ENCODE measurements at regions of chr1 and their contacts with region 1.

Region 1: GRCh38 chr1:246699095-246699735 is 25.0 kb upstream of the SCCPDH start:
- DNase-seq: peak; percentile 89
- ATAC-seq: peak; percentile 88
- H3K4me3 ChIP-seq: peak overlapping the region in 3 of 5 experiments; percentile 31 to 55 (median 52)
- H3K4me3 Mint-ChIP-seq: peak overlapping the region; percentile 26
- H3K27ac ChIP-seq: peak overlapping the region in 1 of 2 donors; percentile 50
- H3K27ac Mint-ChIP-seq: peak overlapping the region; percentile 1
- H3K4me1 ChIP-seq: peaks cover 6 to 15% of the 10 kb centered on the region in 2 donors
- H3K4me1 Mint-ChIP-seq: peaks cover 7% of the 10 kb centered on the region
- H3K27me3 ChIP-seq: no peaks in the 10 kb centered on the region
- H3K27me3 Mint-ChIP-seq: no peaks in the 10 kb centered on the region
- CTCF ChIP-seq: peak; percentile 80

Region 2: DNA sequence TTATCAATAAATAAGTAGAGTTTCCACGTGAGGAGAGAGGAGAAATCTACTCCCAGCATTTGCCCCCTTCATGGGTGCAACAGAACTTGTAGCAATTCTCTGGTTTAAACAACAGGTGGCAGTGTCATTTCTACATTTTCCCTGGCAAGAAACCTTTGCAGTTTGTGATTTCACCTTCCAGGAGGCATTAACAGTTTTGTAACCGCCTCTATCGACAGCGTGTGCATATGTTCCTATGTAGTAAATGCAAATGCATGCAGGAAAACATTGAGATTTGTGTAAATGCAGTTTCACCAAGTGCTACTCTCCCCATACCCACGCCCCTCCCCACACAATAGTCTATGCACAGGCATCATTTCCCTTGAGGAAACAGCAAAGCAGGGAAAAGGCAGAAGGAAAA is 686.9 kb before region 1 on chr1:
- CTCF ChIA-PET with region 1: no interaction called
- POLR2A ChIA-PET with region 1: no interaction called
- intact Hi-C with region 1: loop called (anchors 2 kb)
- DNase-seq: peak; percentile 16
- ATAC-seq: no peak
- H3K4me3 ChIP-seq: no peak overlapping the region
- H3K4me3 Mint-ChIP-seq: no peak overlapping the region
- H3K27ac ChIP-seq: no peak overlapping the region
- H3K27ac Mint-ChIP-seq: no peak overlapping the region
- H3K4me1 ChIP-seq: no peaks in the 10 kb centered on the region
- H3K4me1 Mint-ChIP-seq: no peaks in the 10 kb centered on the region
- H3K27me3 ChIP-seq: no peaks in the 10 kb centered on the region
- H3K27me3 Mint-ChIP-seq: no peaks in the 10 kb centered on the region
- CTCF ChIP-seq: peak; percentile 50

Region 3: GRCh38 chr1:246497331-246497915 is 201.8 kb before region 1 on chr1:
- CTCF ChIA-PET with region 1: interaction called, 4 read pairs
- POLR2A ChIA-PET with region 1: no interaction called
- intact Hi-C with region 1: loop called (anchors 1 kb)
- DNase-seq: peak; percentile 80
- ATAC-seq: peak; percentile 80
- H3K4me3 ChIP-seq: no peak overlapping the region
- H3K4me3 Mint-ChIP-seq: no peak overlapping the region
- H3K27ac ChIP-seq: no peak overlapping the region
- H3K27ac Mint-ChIP-seq: no peak overlapping the region
- H3K4me1 ChIP-seq: peaks cover 0 to 4% of the 10 kb centered on the region in 2 donors
- H3K4me1 Mint-ChIP-seq: peaks cover 4% of the 10 kb centered on the region
- H3K27me3 ChIP-seq: no peaks in the 10 kb centered on the region
- H3K27me3 Mint-ChIP-seq: no peaks in the 10 kb centered on the region
- CTCF ChIP-seq: peak; percentile 89

Region 4: DNA sequence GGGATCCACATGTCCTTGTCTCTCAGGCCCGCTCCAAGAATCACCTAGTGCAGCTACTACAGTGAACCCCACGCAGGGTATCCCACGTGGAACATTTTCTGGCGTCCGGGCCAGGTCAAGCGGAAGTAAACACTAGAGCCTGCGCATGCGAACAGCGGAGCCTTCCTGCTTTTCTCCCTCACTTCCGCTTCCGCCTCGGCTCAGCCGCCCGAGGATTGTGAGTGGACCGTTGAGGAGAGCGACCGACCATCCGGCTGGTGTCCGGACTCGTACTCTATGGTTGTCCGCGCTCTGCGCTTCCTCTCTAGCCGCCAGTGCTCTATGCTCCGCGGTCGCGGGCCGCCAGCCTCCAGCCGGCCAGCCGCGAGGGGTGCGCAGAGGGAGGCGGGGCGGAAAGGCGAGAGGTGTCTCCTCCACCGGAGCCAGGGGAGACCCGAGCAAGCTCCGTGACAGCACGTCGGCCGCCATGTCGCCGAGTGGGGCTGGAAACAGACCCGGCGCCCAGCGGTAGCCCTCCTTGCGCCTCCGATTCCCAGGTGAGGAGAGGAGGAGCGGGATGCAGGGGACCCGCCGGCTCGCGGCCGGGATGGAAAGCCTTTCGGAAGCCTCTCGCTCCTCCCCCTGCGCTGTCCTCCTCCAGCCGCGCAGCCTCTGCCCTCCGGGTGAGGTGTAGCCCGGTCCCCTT is 132.9 kb before region 1 on chr1 and contains the starts of genes CNST and TFB2M:
- CTCF ChIA-PET with region 1: interaction called, 4 read pairs
- POLR2A ChIA-PET with region 1: no interaction called
- intact Hi-C with region 1: loop called (anchors 5 kb)
- DNase-seq: peak; percentile 98
- ATAC-seq: peak; percentile 90
- H3K4me3 ChIP-seq: peak within 1 kb of the TSS; percentile 70 to 100 (median 95)
- H3K4me3 Mint-ChIP-seq: peak within 1 kb of the TSS; percentile 98
- H3K27ac ChIP-seq: peak within 1 kb of the TSS; percentile 83 to 95
- H3K27ac Mint-ChIP-seq: peak within 1 kb of the TSS; percentile 94
- H3K4me1 ChIP-seq: peaks cover 50 to 53% of the 10 kb centered on the region in 2 donors
- H3K4me1 Mint-ChIP-seq: peaks cover 45% of the 10 kb centered on the region
- H3K27me3 ChIP-seq: no peaks in the 10 kb centered on the region
- H3K27me3 Mint-ChIP-seq: no peaks in the 10 kb centered on the region
- CTCF ChIP-seq: no peak
- total RNA-seq, gene CNST: 54.0 and 54.6 TPM in 2 replicates
- total RNA-seq, gene TFB2M: 11.6 and 14.7 TPM in 2 replicates

Region 5: GRCh38 chr1:246843876-246844275 is 144.7 kb after region 1 on chr1:
- CTCF ChIA-PET with region 1: no interaction called
- POLR2A ChIA-PET with region 1: no interaction called
- intact Hi-C with region 1: no loop called
- DNase-seq: no peak
- ATAC-seq: no peak
- H3K4me3 ChIP-seq: no peak overlapping the region
- H3K4me3 Mint-ChIP-seq: no peak overlapping the region
- H3K27ac ChIP-seq: no peak overlapping the region
- H3K27ac Mint-ChIP-seq: no peak overlapping the region
- H3K4me1 ChIP-seq: no peaks in the 10 kb centered on the region
- H3K4me1 Mint-ChIP-seq: no peaks in the 10 kb centered on the region
- H3K27me3 ChIP-seq: no peaks in the 10 kb centered on the region
- H3K27me3 Mint-ChIP-seq: no peaks in the 10 kb centered on the region
- CTCF ChIP-seq: no peak

Measured in B cell (primary cell).